PC-9 (cell line): ENCODE measurements at regions of chr6 and their contacts with region 1.

Region 1: DNA sequence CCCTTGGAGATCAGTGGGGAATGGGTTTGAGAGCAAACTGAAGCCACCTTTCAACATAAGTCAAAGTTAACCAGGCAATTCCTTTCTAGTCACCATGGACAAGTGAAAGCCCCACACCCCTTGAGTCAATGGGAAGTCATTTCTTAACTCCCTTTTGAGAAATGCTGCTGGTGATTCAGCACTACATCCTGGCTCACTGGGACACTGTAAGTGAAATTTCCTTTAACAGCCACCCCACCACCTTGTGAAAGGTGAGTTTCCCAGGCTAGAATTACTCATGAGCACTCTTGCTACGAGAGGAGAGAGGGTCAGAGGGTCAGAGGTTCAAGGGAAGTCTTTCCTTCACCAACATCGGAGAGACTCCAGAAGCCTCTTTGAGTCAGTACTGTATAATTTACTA is 93.3 kb upstream of the MARCKS start:
- DNase-seq: peak; percentile 43 to 99
- H3K4me3 ChIP-seq: peak overlapping the region; percentile 18; the same call in 1 of the 2 replicates
- H3K27ac ChIP-seq: peak overlapping the region; percentile 97
- H3K4me1 ChIP-seq: peaks cover 38% of the 10 kb centered on the region
- H3K27me3 ChIP-seq: no peaks in the 10 kb centered on the region
- CTCF ChIP-seq: no peak

Region 2: GRCh38 chr6:112841553-112842329 is 922.1 kb before region 1 on chr6:
- CTCF ChIA-PET with region 1: no interaction called
- POLR2A ChIA-PET with region 1: no interaction called
- intact Hi-C with region 1: no loop called
- DNase-seq: no peak
- H3K4me3 ChIP-seq: no peak overlapping the region
- H3K27ac ChIP-seq: no peak overlapping the region
- H3K4me1 ChIP-seq: no peaks in the 10 kb centered on the region
- H3K27me3 ChIP-seq: no peaks in the 10 kb centered on the region
- CTCF ChIP-seq: no peak

Region 3: DNA sequence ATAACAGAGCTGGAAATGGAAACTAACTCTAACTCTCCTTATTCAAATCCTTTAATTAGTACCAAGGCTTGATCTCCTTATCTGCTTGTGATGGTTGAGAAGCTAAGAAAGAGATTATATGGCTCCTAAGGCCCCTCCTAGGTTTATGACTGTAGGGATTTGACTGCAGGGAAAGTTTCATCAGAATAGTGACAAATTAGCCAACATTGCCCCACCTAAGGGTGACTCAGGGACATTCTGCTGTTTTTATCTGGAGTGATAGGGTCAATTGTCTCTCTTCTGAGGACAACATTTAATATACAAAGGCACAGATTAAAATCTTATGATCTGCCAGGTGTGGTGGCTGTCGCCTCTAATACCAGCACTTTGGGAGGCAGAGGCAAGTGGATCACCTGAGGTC is 44.8 kb before region 1 on chr6:
- CTCF ChIA-PET with region 1: no interaction called
- POLR2A ChIA-PET with region 1: no interaction called
- intact Hi-C with region 1: loop called (anchors 2 kb)
- DNase-seq: peak; percentile 35 to 85
- H3K4me3 ChIP-seq: no peak overlapping the region
- H3K27ac ChIP-seq: peak overlapping the region; percentile 81
- H3K4me1 ChIP-seq: peaks cover 19% of the 10 kb centered on the region
- H3K27me3 ChIP-seq: no peaks in the 10 kb centered on the region
- CTCF ChIP-seq: no peak